ENCODE measurements at regions of chr21 and their contacts with region 1.

Region 1: DNA sequence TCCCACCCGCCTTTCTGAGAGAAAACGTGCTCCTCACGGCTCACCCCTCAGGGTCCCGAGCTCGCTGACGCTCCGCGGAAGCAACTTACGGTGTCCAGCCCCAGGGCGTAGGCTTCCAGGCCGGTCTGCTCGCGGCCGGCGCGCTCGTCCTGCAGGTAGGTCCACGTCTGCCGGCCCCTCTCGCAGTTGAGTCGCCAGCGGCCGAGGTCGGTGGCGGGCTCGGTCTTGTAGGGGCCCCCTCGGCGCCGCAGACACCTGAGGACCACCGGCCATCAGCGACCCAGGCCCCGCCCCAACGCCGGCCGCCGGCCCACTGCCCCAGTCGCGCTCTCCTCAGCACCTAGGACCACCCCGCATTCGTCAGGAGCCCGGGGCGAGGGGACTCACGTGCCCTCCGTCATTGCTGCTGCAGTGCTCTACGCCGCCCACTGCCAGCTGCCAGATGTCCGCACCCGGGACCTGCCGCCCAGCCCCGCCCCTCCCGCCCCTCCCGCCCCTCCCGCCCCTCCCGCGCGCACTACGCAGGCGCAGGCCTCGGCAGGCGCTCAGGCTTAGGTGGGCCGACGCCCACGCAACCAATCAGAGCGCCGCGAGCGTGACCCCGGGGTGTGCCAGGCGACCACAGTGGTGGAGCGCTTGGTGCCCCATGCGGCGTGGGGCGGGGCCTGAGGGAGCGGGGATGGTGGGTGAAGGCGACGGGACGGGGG is at the start of gene LSS:
- DNase-seq: peak; percentile 96 to 99 (median 98)
- H3K4me3 ChIP-seq: peak within 1 kb of the TSS; percentile 67
- H3K27ac ChIP-seq: peak within 1 kb of the TSS; percentile 77 to 81
- H3K4me1 ChIP-seq: peaks cover 13% of the 10 kb centered on the region
- H3K27me3 ChIP-seq: no peaks in the 10 kb centered on the region
- CTCF ChIP-seq: peak in 1 of 3 donors; percentile 15
- EP300 ChIP-seq: no peak
- POLR2A ChIP-seq: no peak
- total RNA-seq, gene LSS: 33.2 to 201 (median 80.9) TPM

Region 2: GRCh38 chr21:45874716-45875415 is 353.6 kb before region 1 on chr21:
- intact Hi-C with region 1: no loop called
- DNase-seq: peak; percentile 32 to 76 (median 44)
- H3K4me3 ChIP-seq: no peak overlapping the region
- H3K27ac ChIP-seq: no peak overlapping the region
- H3K4me1 ChIP-seq: no peaks in the 10 kb centered on the region
- H3K27me3 ChIP-seq: no peaks in the 10 kb centered on the region
- CTCF ChIP-seq: no peak
- EP300 ChIP-seq: no peak
- POLR2A ChIP-seq: no peak

Region 3: DNA sequence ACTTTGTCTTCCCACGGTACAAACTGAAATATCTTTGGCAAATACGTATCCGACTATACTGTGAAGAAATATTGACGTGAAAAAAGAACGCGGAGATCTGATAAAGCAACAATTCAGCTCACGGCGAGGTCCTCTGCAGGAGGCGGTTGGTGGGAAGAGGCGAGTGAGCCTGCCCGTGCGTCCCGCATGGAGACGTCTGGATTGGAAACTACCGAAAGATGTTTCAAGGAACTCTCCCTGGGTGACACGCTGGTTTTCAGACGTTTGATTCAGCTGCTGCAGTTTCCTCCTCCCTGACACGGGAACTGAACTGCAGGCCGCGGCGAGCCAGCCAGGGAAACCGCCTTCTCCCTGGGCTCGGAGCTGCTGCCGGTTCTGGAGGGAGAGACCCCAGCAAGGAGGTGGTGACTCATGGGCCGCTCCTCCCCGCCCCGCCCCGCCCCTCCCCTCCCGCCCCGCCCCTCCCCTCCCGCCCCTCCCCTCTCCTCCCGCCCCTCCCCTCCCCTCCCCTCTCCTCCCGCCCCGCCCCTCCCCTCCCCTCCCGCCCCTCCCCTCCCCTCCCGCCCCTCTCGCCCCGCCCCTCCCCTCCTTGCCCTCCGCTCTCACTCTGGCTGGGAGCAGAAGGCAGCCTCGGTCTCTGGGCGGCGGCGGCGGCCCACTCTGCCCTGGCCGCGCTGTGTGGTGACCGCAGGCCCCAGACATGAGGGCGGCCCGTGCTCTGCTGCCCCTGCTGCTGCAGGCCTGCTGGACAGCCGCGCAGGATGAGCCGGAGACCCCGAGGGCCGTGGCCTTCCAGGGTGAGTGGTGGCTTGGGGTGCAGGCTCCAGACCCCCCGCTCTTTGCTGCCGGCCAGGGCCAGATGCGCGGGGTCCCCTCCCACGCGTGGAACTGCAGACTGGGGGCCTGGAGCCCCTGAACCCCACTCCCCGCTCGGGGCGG is 247.1 kb before region 1 on chr21 and contains the start of gene COL6A1:
- intact Hi-C with region 1: no loop called
- DNase-seq: peak; percentile 87 to 90 (median 89)
- H3K4me3 ChIP-seq: peak within 1 kb of the TSS; percentile 99
- H3K27ac ChIP-seq: peak within 1 kb of the TSS; percentile 65 to 74
- H3K4me1 ChIP-seq: peaks cover 13% of the 10 kb centered on the region
- H3K27me3 ChIP-seq: no peaks in the 10 kb centered on the region
- CTCF ChIP-seq: no peak
- EP300 ChIP-seq: peak; percentile 31
- POLR2A ChIP-seq: peak; percentile 66
- total RNA-seq, gene COL6A1: 389 to 779 (median 731) TPM

Region 4: DNA sequence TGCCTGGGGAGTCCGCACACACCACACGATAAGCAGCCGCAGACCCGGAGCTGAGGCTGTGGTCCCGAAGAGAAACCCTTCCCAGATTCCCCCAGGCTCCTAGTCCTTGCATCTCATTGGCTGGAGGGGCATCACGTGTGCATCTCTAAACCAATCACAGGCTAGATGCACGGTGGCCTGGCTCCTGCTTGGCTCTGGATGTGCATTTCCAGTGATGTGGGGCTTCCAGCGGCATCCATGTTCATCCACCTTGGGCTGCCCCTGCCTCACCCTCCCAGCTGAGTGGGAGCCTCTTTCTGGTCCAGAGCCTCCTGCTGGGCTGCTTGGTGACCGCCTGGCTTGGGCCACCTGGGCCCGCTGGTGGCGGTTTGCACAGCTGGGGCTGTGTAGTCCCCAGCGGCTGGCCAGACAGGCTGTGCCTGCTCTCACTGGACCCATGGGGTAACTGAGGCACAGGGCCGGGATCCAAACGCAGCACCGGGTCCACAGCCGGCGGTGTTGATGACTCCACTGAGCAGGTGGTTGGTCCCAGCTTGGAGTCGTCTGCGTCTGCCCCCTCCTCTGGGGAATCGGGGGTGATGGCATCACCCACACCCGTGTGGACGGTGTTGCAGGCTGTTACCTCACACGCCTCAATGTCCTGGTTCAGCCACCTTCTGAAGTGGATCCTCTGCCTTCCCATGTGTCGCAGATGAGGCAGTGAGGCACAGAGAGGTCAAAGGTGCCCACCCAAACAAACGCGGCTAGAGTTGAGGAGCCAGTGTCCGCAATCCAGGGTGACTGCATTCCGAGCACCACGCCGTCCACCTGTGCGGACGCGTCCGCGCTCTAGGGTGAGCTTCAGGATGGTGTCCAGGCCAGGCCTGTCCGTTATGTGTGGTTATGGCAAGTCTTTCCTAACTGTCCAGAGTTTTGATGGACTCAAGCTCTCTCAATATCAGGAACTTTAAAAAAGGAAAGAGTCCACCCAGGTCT is 205.7 kb before region 1 on chr21:
- intact Hi-C with region 1: no loop called
- DNase-seq: peak in 4 of 5 donors; percentile 40 to 64 (median 50)
- H3K4me3 ChIP-seq: no peak overlapping the region
- H3K27ac ChIP-seq: peak overlapping the region; percentile 1 to 44
- H3K4me1 ChIP-seq: peaks cover 18% of the 10 kb centered on the region
- H3K27me3 ChIP-seq: no peaks in the 10 kb centered on the region
- CTCF ChIP-seq: no peak
- EP300 ChIP-seq: no peak
- POLR2A ChIP-seq: no peak

Region 5: GRCh38 chr21:46153247-46154150 is 75.0 kb before region 1 on chr21:
- intact Hi-C with region 1: loop called in 2 of 4 experiments (anchors 5 to 10 kb)
- DNase-seq: peak; percentile 72 to 85 (median 80)
- H3K4me3 ChIP-seq: no peak overlapping the region
- H3K27ac ChIP-seq: peak overlapping the region; percentile 26 to 55
- H3K4me1 ChIP-seq: peaks cover 9% of the 10 kb centered on the region
- H3K27me3 ChIP-seq: no peaks in the 10 kb centered on the region
- CTCF ChIP-seq: peak; percentile 55 to 77 (median 62)
- EP300 ChIP-seq: no peak
- POLR2A ChIP-seq: no peak